A673 (cell line): ENCODE measurements at regions of chr15 and their contacts with region 1.

Region 1: DNA sequence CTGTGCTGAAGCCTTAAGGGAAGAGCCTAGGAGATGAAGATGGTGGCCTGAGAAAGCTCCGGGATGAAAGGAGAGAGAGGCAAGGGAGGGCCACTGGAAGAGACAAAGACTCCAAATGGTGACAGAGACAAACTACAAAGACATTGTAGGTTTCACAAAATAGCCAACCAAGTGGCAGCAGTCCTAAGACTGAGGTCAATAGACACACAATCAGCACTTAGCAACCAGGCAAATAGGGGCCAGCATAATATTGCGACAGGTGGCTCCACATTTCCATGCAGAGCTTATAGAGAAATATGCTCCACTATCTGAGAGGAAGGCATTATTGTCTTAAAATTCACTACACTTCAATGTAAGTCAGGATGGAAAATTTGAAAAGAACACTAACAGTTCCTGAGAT is 22.1 kb upstream of the MYO5C start:
- DNase-seq: no peak
- H3K4me3 ChIP-seq: no peak overlapping the region
- H3K27ac ChIP-seq: no peak overlapping the region
- H3K4me1 ChIP-seq: no peaks in the 10 kb centered on the region
- H3K27me3 ChIP-seq: no peaks in the 10 kb centered on the region
- CTCF ChIP-seq: no peak

Region 2: GRCh38 chr15:52967967-52968366 is 650.3 kb after region 1 on chr15:
- CTCF ChIA-PET with region 1: interaction called, 12 read pairs
- POLR2A ChIA-PET with region 1: no interaction called
- intact Hi-C with region 1: no loop called
- DNase-seq: no peak
- H3K4me3 ChIP-seq: no peak overlapping the region
- H3K27ac ChIP-seq: no peak overlapping the region
- H3K4me1 ChIP-seq: no peaks in the 10 kb centered on the region
- H3K27me3 ChIP-seq: peaks cover 4% of the 10 kb centered on the region
- CTCF ChIP-seq: no peak